ENCODE measurements at regions of chr6 and their contacts with region 1.

Region 1: DNA sequence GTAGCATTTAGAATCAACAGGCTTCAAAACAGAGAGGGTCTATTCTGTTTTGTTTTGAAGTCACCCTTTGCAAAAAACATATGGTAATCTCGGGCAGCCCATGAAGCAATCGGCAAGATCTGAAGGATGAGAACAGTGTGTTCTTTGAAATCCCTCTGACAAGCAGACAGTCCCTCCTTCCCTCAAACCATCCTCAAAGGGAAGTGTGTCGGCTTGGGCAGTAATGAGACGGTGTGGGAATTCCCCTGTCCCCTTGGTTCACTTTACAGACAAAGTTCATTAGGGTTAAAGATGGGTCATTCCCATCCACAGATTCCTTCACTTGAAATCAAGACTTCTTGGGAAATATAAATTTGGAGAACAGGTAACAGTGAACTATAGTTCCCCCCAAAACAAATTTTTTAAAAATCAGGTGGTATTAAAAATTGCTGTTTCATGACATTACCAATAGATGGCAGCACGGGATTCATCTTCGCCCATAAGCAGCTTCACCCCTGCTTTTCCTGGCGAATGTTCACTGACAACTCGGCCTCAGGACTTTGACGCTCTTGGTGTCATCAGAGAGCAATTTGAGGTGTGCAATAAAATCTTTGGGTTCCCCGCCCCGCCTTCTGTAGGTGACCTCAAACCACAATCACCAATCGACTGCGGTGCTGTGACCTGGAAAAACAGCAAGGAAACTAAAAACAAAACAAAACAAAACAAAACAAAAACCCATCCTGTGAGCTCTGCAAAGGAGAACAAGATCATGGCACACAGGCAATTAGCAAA is 159.3 kb upstream of the TNFAIP3 start:
- DNase-seq: peak; percentile 35 to 60
- ATAC-seq: peak; percentile 71 to 88 (median 82)
- H3K4me3 ChIP-seq: peak overlapping the region; percentile 35
- H3K27ac ChIP-seq: no peak overlapping the region
- H3K4me1 ChIP-seq: peaks cover 13% of the 10 kb centered on the region
- H3K27me3 ChIP-seq: no peaks in the 10 kb centered on the region
- CTCF ChIP-seq: peak; percentile 79

Region 2: GRCh38 chr6:137399881-137400443 is 307.8 kb before region 1 on chr6:
- intact Hi-C with region 1: no loop called
- DNase-seq: no peak
- ATAC-seq: no peak
- H3K4me3 ChIP-seq: no peak overlapping the region
- H3K27ac ChIP-seq: no peak overlapping the region
- H3K4me1 ChIP-seq: no peaks in the 10 kb centered on the region
- H3K27me3 ChIP-seq: no peaks in the 10 kb centered on the region
- CTCF ChIP-seq: no peak

Region 3: DNA sequence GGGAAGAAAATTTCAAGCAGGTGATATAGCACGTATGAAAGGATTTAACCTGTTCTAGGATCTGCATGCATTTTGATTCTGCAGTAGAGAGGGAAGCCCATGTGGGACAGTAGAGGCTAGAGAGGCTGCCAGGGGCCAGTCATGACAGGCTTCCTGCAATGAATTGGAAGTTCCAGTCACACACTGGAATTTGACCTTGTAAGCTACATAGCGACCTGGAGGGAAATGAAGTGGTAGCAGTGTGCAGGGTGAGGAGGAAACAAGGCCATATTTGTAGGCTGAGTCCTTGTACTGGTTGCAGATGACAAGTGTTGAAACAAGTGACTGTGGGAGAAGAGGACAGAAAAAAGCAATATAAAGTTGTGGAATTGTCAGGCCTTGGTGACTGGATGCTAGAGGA is 155.0 kb before region 1 on chr6:
- intact Hi-C with region 1: no loop called
- DNase-seq: no peak
- ATAC-seq: no peak
- H3K4me3 ChIP-seq: no peak overlapping the region
- H3K27ac ChIP-seq: no peak overlapping the region
- H3K4me1 ChIP-seq: no peaks in the 10 kb centered on the region
- H3K27me3 ChIP-seq: no peaks in the 10 kb centered on the region
- CTCF ChIP-seq: no peak

Region 4: GRCh38 chr6:137749696-137750211 is 42.0 kb after region 1 on chr6:
- intact Hi-C with region 1: loop called in 1 of 2 experiments (anchors 2 kb)
- DNase-seq: no peak
- ATAC-seq: peak in 2 of 4 donors; percentile 24 to 43
- H3K4me3 ChIP-seq: peak overlapping the region; percentile 44
- H3K27ac ChIP-seq: no peak overlapping the region
- H3K4me1 ChIP-seq: peaks cover 23% of the 10 kb centered on the region
- H3K27me3 ChIP-seq: no peaks in the 10 kb centered on the region
- CTCF ChIP-seq: no peak

Region 5: DNA sequence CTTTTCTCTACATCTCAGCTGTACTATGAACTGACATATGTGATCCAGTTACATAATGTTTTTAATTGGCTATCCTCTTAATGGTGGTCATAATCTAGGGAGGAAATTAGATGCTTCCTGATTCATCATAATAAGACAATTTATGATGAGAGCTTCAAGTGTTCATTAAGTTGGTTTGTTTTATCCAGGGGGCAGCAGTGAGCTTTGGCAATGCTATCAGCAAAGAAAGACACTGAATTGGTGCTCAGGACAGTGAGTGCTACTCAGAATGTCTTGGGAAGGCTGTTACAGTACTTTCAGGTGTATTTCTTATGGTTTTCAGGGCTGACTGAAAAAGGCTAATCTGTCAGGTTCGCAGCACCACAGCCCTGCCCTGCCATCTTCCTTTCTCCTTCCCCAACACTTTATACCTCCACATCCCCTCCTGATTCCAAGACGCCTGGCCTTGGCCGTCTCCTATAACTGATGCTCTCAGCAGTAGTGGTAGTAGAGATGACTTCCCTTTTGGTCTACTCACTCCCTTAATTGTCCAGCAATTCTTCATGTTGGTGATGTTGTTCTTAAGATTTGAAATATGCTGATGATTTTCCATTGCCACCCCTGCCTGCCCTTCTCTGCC is 92.3 kb after region 1 on chr6:
- intact Hi-C with region 1: loop called in 1 of 2 experiments (anchors 5 kb)
- DNase-seq: peak in 1 of 2 donors; percentile 17
- ATAC-seq: peak in 1 of 4 donors; percentile 42
- H3K4me3 ChIP-seq: no peak overlapping the region
- H3K27ac ChIP-seq: no peak overlapping the region
- H3K4me1 ChIP-seq: no peaks in the 10 kb centered on the region
- H3K27me3 ChIP-seq: no peaks in the 10 kb centered on the region
- CTCF ChIP-seq: peak; percentile 47

Region 6: DNA sequence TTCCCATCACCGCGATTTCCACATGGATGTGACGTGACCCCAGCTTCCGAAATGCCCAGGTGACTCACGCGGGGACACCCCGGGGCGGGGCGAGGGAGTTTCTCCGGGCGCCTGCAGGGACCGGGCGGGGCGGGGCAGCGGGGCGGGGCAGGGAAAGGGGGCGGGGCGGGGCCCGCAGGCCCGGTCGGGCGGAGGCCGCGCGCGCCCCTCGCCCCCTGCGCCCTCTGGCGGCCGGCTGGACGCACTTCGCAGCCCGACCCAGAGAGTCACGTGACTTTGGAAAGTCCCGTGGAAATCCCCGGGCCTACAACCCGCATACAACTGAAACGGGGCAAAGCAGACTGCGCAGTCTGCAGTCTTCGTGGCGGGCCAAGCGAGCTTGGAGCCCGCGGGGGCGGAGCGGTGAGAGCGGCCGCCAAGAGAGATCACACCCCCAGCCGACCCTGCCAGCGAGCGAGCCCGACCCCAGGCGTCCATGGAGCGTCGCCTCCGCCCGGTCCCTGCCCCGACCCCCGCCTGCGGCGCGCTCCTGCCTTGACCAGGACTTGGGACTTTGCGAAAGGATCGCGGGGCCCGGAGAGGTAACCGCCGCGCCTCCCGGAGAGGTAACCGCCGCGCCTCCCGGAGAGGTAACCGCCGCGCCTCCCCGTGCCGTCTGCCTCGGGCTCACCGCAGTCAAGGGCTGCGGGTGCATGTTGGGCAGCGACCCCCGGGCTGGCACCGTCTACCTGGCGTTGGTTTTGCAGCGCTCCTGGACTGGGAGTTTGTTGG is 159.3 kb after region 1 on chr6 and contains the start of gene TNFAIP3:
- intact Hi-C with region 1: loop called (anchors 1 to 2 kb)
- DNase-seq: peak; percentile 95 to 97
- ATAC-seq: peak; percentile 92 to 95 (median 92)
- H3K4me3 ChIP-seq: peak within 1 kb of the TSS; percentile 80
- H3K27ac ChIP-seq: peak within 1 kb of the TSS; percentile 97
- H3K4me1 ChIP-seq: peaks cover 39% of the 10 kb centered on the region
- H3K27me3 ChIP-seq: no peaks in the 10 kb centered on the region
- CTCF ChIP-seq: peak; percentile 95
- total RNA-seq, gene TNFAIP3: 4.0 to 12.8 (median 8.3) TPM

Region 7: GRCh38 chr6:137944793-137945498 is 237.2 kb after region 1 on chr6:
- intact Hi-C with region 1: loop called (anchors 2 to 5 kb)
- DNase-seq: no peak
- ATAC-seq: peak; percentile 74 to 92 (median 76)
- H3K4me3 ChIP-seq: no peak overlapping the region
- H3K27ac ChIP-seq: no peak overlapping the region
- H3K4me1 ChIP-seq: no peaks in the 10 kb centered on the region
- H3K27me3 ChIP-seq: no peaks in the 10 kb centered on the region
- CTCF ChIP-seq: peak; percentile 82

Region 8: DNA sequence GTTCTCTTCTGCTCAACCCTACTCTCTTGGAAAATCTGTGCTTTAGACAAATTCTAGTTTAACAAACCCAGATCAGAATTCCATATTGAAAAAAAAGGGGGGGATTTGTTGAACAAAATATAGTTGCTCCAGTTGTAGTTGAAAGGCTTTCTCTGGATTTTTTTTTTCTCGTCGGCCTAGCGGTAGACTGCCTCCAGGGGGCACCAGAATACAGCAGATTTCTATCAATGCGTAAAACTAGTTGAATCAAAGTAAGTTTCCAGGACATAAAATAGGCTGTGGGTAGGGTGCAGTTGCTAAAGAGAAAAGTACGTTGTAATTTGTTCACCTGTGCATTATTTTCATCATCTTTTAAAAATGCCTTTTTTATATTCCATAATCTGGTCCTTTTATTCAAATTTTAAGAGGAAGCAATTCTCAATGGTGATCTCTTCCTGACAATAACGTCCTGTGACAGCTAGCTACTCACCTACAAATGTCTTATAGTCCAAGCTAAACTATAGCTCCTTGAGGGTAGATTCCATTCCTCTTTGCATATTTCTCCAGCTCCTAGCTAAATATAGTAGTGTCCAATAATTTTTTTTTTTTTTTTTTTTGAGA is 294.1 kb after region 1 on chr6:
- intact Hi-C with region 1: loop called (anchors 5 kb)
- DNase-seq: peak in 1 of 2 donors; percentile 28
- ATAC-seq: peak in 2 of 4 donors; percentile 55 to 70
- H3K4me3 ChIP-seq: no peak overlapping the region
- H3K27ac ChIP-seq: no peak overlapping the region
- H3K4me1 ChIP-seq: no peaks in the 10 kb centered on the region
- H3K27me3 ChIP-seq: no peaks in the 10 kb centered on the region
- CTCF ChIP-seq: peak; percentile 81

Region 9: GRCh38 chr6:138109042-138109997 is 401.5 kb after region 1 on chr6:
- intact Hi-C with region 1: loop called (anchors 5 kb)
- DNase-seq: peak; percentile 50 to 57
- ATAC-seq: peak; percentile 46 to 75 (median 61)
- H3K4me3 ChIP-seq: no peak overlapping the region
- H3K27ac ChIP-seq: no peak overlapping the region
- H3K4me1 ChIP-seq: no peaks in the 10 kb centered on the region
- H3K27me3 ChIP-seq: peaks cover 0 to 46% (median 4%) of the 10 kb centered on the region in 3 donors
- CTCF ChIP-seq: peak; percentile 90